GM12878 (cell line): ENCODE measurements at regions of chr7 and their contacts with region 1.

Region 1: GRCh38 chr7:18320971-18321567 is 174.5 kb upstream of the HDAC9 start:
- DNase-seq: no peak
- ATAC-seq: peak; percentile 91
- H3K4me3 ChIP-seq: no peak overlapping the region
- H3K27ac ChIP-seq: no peak overlapping the region
- H3K4me1 ChIP-seq: no peaks in the 10 kb centered on the region
- H3K27me3 ChIP-seq: no peaks in the 10 kb centered on the region; a peak in 1 of 4 replicates
- CTCF ChIP-seq: peak; percentile 44 to 60 (median 58); a peak in 5 of 6 replicates
- EP300 ChIP-seq: no peak
- POLR2A ChIP-seq: no peak
- RAD21 ChIP-seq: peak; percentile 66

Region 2: GRCh38 chr7:17680943-17681351 is 640.1 kb before region 1 on chr7:
- CTCF ChIA-PET with region 1: interaction called, 3 read pairs
- POLR2A ChIA-PET with region 1: no interaction called
- RAD21 ChIA-PET with region 1: interaction called, 3 read pairs
- SMC1A ChIA-PET with region 1: interaction called, 6 read pairs
- in situ Hi-C with region 1: loop called (anchors 25 kb)
- intact Hi-C with region 1: loop called (anchors 1 kb)
- DNase-seq: no peak
- ATAC-seq: peak; percentile 64; the same call in 2 of the 3 replicates
- H3K4me3 ChIP-seq: no peak overlapping the region
- H3K27ac ChIP-seq: no peak overlapping the region
- H3K4me1 ChIP-seq: no peaks in the 10 kb centered on the region
- H3K27me3 ChIP-seq: 0 out of 4 replicates have a peak, but pooled peaks cover 0 to 4% of the 10 kb centered on the region in 2 experiments
- CTCF ChIP-seq: peak in 2 of 3 experiments; percentile 40 to 44; a peak in 4 of 6 replicates
- EP300 ChIP-seq: no peak
- POLR2A ChIP-seq: no peak
- RAD21 ChIP-seq: peak; percentile 45

Region 3: GRCh38 chr7:17706734-17707133 is 614.3 kb before region 1 on chr7:
- CTCF ChIA-PET with region 1: interaction called, 5 read pairs
- POLR2A ChIA-PET with region 1: no interaction called
- RAD21 ChIA-PET with region 1: interaction called, 7 read pairs
- SMC1A ChIA-PET with region 1: interaction called, 13 read pairs
- in situ Hi-C with region 1: no loop called
- intact Hi-C with region 1: loop called (anchors 5 kb)
- DNase-seq: peak; percentile 12
- ATAC-seq: peak; percentile 93
- H3K4me3 ChIP-seq: no peak overlapping the region
- H3K27ac ChIP-seq: no peak overlapping the region
- H3K4me1 ChIP-seq: no peaks in the 10 kb centered on the region
- H3K27me3 ChIP-seq: no peaks in the 10 kb centered on the region
- CTCF ChIP-seq: peak; percentile 64 to 74 (median 68)
- EP300 ChIP-seq: no peak
- POLR2A ChIP-seq: no peak
- RAD21 ChIP-seq: peak; percentile 94

Region 4: DNA sequence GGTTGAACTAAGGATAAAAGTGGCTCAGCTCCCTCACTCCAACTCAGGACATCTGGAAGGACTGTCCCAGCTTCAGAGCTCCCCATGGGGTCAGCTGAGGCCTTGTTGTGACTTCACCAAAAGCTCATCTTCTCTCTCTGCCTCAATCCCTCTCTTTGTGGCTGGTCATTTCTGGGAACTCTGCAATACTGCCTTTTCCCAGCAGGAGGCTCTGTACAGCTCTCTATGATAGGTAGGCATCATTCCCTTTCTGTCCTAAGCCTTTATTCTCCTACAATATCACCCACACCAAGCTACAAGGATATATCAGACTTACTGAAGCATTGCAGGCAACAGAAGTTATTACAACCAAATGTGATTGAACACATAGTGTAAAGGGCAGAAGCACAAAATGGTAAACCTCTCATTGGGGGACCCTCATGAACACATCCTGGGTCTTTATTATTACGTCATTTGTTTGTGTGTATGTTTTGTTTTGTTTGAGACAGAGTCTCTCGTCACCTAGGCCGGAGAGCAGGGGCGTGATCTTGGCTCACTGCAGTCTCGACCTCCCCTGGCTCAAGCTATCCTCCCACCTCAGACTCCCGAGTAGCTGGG is 256.7 kb before region 1 on chr7:
- CTCF ChIA-PET with region 1: interaction called, 4 read pairs
- POLR2A ChIA-PET with region 1: no interaction called
- RAD21 ChIA-PET with region 1: no interaction called
- SMC1A ChIA-PET with region 1: interaction called, 3 read pairs
- in situ Hi-C with region 1: no loop called
- intact Hi-C with region 1: loop called (anchors 2 kb)
- DNase-seq: no peak
- ATAC-seq: peak; percentile 68
- H3K4me3 ChIP-seq: no peak overlapping the region
- H3K27ac ChIP-seq: no peak overlapping the region
- H3K4me1 ChIP-seq: no peaks in the 10 kb centered on the region
- H3K27me3 ChIP-seq: no peaks in the 10 kb centered on the region
- CTCF ChIP-seq: peak; percentile 40 to 64 (median 64)
- EP300 ChIP-seq: no peak
- POLR2A ChIP-seq: no peak
- RAD21 ChIP-seq: peak; percentile 23; the same call in 1 of the 2 replicates

Region 5: GRCh38 chr7:18212758-18213157 is 108.3 kb before region 1 on chr7:
- CTCF ChIA-PET with region 1: interaction called, 8 read pairs
- POLR2A ChIA-PET with region 1: no interaction called
- RAD21 ChIA-PET with region 1: no interaction called
- SMC1A ChIA-PET with region 1: interaction called, 3 read pairs
- in situ Hi-C with region 1: no loop called
- intact Hi-C with region 1: loop called (anchors 1 kb)
- DNase-seq: no peak
- ATAC-seq: no peak
- H3K4me3 ChIP-seq: no peak overlapping the region
- H3K27ac ChIP-seq: no peak overlapping the region
- H3K4me1 ChIP-seq: no peaks in the 10 kb centered on the region
- H3K27me3 ChIP-seq: no peaks in the 10 kb centered on the region; a peak in 1 of 4 replicates
- CTCF ChIP-seq: no peak
- EP300 ChIP-seq: no peak
- POLR2A ChIP-seq: no peak
- RAD21 ChIP-seq: no peak

Region 6: GRCh38 chr7:18290223-18290622 is 30.8 kb before region 1 on chr7:
- CTCF ChIA-PET with region 1: interaction called, 11 read pairs
- POLR2A ChIA-PET with region 1: no interaction called
- RAD21 ChIA-PET with region 1: no interaction called
- SMC1A ChIA-PET with region 1: interaction called, 3 read pairs
- in situ Hi-C with region 1: no loop called
- intact Hi-C with region 1: no loop called
- DNase-seq: no peak
- ATAC-seq: peak; percentile 64
- H3K4me3 ChIP-seq: no peak overlapping the region
- H3K27ac ChIP-seq: no peak overlapping the region
- H3K4me1 ChIP-seq: no peaks in the 10 kb centered on the region
- H3K27me3 ChIP-seq: no peaks in the 10 kb centered on the region; a peak in 1 of 4 replicates
- CTCF ChIP-seq: no peak
- EP300 ChIP-seq: no peak
- POLR2A ChIP-seq: no peak
- RAD21 ChIP-seq: no peak

Region 7: DNA sequence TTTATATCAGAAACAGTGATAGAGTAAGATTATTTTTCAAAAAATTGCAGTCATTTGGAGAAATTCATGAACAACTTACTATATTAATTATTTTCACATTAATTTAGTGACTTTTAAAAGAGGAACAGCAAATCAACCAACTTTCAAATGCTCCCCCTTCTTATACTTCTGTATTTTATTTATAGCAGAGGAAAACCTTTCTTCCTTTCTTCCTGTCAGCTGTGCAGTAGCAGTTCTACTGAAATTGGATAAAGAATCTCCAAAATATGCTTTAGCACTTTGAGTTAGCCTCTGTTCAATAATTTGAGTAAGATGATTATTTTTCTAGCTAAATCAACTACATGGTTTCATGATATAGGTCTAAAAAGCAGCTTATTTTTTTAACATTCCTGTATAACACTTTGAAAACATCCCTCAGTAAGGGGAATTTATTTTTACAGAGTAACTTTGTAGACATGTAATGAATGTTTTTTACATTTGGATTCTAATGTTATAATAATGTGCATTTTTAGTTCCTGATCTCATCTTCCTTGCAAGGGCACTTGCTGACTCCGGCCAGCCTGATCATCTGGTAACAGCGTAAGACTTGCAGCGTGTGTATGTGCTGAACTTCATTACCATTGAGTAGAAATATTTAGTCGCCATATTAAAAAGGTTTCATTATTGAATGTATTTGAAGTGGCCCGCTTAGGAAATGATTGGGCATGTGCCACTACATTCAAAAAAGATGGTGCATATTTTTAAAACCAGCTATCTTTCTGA is 16.2 kb after region 1 on chr7:
- CTCF ChIA-PET with region 1: interaction called, 11 read pairs
- POLR2A ChIA-PET with region 1: interaction called, 6 read pairs
- RAD21 ChIA-PET with region 1: interaction called, 3 read pairs
- SMC1A ChIA-PET with region 1: interaction called, 5 read pairs
- in situ Hi-C with region 1: no loop called
- intact Hi-C with region 1: no loop called
- DNase-seq: no peak
- ATAC-seq: no peak
- H3K4me3 ChIP-seq: no peak overlapping the region
- H3K27ac ChIP-seq: no peak overlapping the region
- H3K4me1 ChIP-seq: no peaks in the 10 kb centered on the region
- H3K27me3 ChIP-seq: no peaks in the 10 kb centered on the region
- CTCF ChIP-seq: no peak
- EP300 ChIP-seq: no peak
- POLR2A ChIP-seq: no peak
- RAD21 ChIP-seq: no peak